ENCODE measurements at regions of chr10 and their contacts with region 1.

Region 1: GRCh38 chr10:44696496-44696895 is 214.6 kb upstream of the TMEM72 start:
- DNase-seq: peak; percentile 63
- H3K4me3 ChIP-seq: no peak overlapping the region
- CTCF ChIP-seq: no peak

Region 2: DNA sequence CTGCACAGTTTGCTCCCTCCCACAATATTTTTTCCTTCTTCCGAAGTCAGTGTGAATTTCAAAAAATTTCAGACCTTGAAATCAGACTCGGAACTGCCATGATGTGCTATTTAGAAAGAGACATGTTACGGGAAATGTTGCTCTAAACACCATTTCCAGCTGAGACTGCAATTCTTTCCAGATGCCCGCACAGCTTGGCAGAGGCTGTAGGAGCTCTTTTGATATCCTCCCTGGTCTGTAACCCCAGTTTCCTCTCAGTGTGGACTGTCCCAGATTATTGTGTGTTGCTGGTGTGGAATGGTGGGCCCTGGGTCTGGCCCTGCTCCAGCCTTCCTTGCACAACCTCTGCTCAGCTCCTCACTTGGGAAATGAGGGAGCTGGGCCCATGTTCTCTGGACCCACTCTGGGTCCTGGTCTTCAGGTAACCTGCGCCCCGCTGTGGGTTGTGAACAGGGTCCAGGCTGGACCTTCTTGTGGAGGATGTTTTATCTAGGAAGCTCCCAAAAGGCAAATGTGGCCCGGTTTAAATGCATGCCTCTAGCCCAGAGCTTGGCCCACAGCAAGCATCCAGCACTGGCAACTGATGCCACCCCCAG is 138.8 kb before region 1 on chr10:
- CTCF ChIA-PET with region 1: no interaction called
- POLR2A ChIA-PET with region 1: no interaction called
- DNase-seq: no peak
- H3K4me3 ChIP-seq: no peak overlapping the region
- CTCF ChIP-seq: no peak

Region 3: DNA sequence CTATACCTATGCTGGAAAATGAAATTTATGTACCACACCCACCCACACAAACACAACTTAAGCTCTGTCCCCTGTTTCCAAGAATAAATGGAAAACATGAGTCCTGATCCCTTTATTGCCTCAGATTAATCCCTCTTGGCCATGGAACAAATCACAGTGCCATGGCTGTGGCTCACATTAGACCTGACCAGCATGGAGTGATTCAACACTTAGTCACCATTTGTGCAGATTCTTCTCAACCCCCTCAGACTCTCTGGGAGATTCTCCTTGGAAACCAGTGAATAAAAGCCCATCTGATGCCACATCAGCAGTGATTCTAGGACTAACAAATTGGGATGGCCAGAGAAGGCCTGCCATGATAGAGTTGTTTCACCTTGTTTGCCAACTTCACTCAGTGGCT is 10.2 kb after region 1 on chr10:
- CTCF ChIA-PET with region 1: interaction called, 17 read pairs
- POLR2A ChIA-PET with region 1: interaction called, 6 read pairs
- DNase-seq: peak; percentile 91
- H3K4me3 ChIP-seq: no peak overlapping the region
- CTCF ChIP-seq: no peak

Region 4: DNA sequence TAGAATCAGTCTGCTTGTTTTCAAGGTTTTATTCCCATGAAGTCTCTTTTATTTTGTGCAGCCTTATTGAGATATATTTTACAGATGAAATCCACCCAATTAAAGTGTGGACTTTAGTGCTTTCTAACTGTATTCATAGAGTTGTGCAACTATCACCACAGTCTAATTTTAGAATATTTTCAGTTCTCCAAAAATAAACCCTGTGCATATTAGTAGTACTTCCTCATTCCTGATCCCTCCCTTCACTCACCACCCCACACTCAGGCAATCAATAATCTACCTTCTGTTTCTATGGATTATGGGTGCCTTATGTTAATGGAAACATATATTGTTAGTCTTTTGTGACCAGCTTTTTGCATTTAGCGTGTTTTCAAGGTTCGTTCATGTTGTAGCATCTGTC is 28.9 kb after region 1 on chr10:
- CTCF ChIA-PET with region 1: no interaction called
- POLR2A ChIA-PET with region 1: no interaction called
- DNase-seq: no peak
- H3K4me3 ChIP-seq: no peak overlapping the region
- CTCF ChIP-seq: no peak

Region 5: GRCh38 chr10:45000752-45001380 is 304.4 kb after region 1 on chr10 and contains the start of gene ZNF22:
- CTCF ChIA-PET with region 1: no interaction called
- POLR2A ChIA-PET with region 1: no interaction called
- DNase-seq: no peak
- H3K4me3 ChIP-seq: peak within 1 kb of the TSS; percentile 72
- CTCF ChIP-seq: no peak

Measured in AG04449 (cell line).